Right ventricle myocardium superior (tissue), 1 donor: ENCODE measurements at regions of chr5 and their contacts with region 1.

Region 1: DNA sequence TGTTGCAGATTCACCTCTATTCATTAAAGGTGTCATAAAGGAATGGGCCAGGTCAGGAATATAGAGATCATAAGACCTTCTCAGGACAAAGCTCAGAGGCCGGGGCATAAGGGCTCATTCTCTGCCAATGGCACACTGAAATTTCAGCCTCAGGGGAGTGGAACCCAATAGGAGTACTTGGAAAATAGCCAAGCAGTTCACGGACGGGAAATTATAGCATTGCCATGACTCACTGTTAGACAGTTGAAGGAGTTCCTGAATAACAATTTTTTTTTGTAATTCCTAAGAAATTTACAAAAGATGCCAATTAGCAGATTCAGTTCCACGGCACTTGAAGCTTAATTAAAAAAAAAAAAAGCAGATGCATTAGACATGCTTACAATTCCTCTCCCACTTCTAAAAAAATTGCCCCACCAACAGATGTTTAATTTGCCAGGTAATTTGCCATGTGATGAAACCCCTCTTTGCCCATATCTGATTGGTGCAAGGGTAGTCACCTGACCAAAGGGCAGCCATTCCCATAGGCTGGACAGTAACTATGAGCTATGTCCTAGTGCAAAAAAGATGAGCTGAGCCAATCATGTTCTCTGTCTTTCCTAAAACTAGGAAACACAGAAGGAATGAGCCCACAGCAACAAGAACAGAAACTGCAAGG is 58.6 kb downstream of the PTCD2 start:
- DNase-seq: peak; percentile 44
- ATAC-seq: peak; percentile 72

Region 2: GRCh38 chr5:72518001-72518683 is 139.4 kb after region 1 on chr5:
- intact Hi-C with region 1: loop called (anchors 5 kb)
- DNase-seq: peak; percentile 74
- ATAC-seq: peak; percentile 78